Activated CD8-positive, alpha-beta memory T cell treated with anti-CD3 and anti-CD28 coated beads, Interleukin-2, amount 10 ng/mL, durations not matched to agents 7 days and 5 days (primary cell): ENCODE measurements at regions of chr2 and their contacts with region 1.

Region 1: GRCh38 chr2:135709992-135710391 is 31.7 kb upstream of the UBXN4 start:
- DNase-seq: peak; percentile 75
- ATAC-seq: peak; percentile 57
- H3K4me3 Mint-ChIP-seq: no peak overlapping the region
- H3K27ac Mint-ChIP-seq: no peak overlapping the region
- H3K4me1 Mint-ChIP-seq: peaks cover 2% of the 10 kb centered on the region
- H3K27me3 Mint-ChIP-seq: no peaks in the 10 kb centered on the region

Region 2: GRCh38 chr2:134988994-134989605 is 720.9 kb before region 1 on chr2:
- CTCF ChIA-PET with region 1: interaction called, 14 read pairs
- DNase-seq: no peak
- ATAC-seq: no peak
- H3K4me3 Mint-ChIP-seq: no peak overlapping the region
- H3K27ac Mint-ChIP-seq: no peak overlapping the region
- H3K4me1 Mint-ChIP-seq: no peaks in the 10 kb centered on the region
- H3K27me3 Mint-ChIP-seq: peaks cover 25% of the 10 kb centered on the region

Region 3: GRCh38 chr2:135004005-135004746 is 705.8 kb before region 1 on chr2:
- CTCF ChIA-PET with region 1: interaction called, 71 read pairs
- DNase-seq: peak; percentile 75
- ATAC-seq: peak; percentile 99
- H3K4me3 Mint-ChIP-seq: no peak overlapping the region
- H3K27ac Mint-ChIP-seq: no peak overlapping the region
- H3K4me1 Mint-ChIP-seq: peaks cover 5% of the 10 kb centered on the region
- H3K27me3 Mint-ChIP-seq: peaks cover 30% of the 10 kb centered on the region

Region 4: DNA sequence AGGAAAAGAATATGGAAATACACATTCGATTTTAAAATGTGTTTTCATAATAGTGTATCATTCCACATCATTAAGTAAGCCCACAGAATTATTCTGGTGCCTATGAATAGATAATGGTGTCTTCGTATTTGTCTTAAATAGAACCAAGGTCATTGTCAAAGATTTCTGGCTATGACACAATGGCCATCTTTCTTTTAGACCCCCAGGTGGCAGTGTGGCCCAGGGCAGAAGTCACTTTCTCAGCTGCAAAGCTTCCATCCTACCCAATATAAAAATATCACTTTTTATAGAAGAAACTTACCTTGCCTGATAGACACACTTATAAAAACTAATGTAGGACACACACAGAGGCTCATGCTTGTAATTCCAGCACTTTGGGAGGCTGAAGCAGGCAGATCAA is 236.4 kb before region 1 on chr2:
- CTCF ChIA-PET with region 1: interaction called, 61 read pairs
- DNase-seq: peak; percentile 47
- ATAC-seq: peak; percentile 33
- H3K4me3 Mint-ChIP-seq: no peak overlapping the region
- H3K27ac Mint-ChIP-seq: no peak overlapping the region
- H3K4me1 Mint-ChIP-seq: peaks cover 9% of the 10 kb centered on the region
- H3K27me3 Mint-ChIP-seq: no peaks in the 10 kb centered on the region

Region 5: GRCh38 chr2:135531231-135532228 is 178.5 kb before region 1 on chr2 and contains the start of gene R3HDM1:
- CTCF ChIA-PET with region 1: interaction called, 10 read pairs
- DNase-seq: peak; percentile 97
- ATAC-seq: peak; percentile 86
- H3K4me3 Mint-ChIP-seq: no peak within 1 kb of the TSS
- H3K27ac Mint-ChIP-seq: peak within 1 kb of the TSS; percentile 77
- H3K4me1 Mint-ChIP-seq: peaks cover 37% of the 10 kb centered on the region
- H3K27me3 Mint-ChIP-seq: no peaks in the 10 kb centered on the region
- total RNA-seq, gene R3HDM1: 47.5 to 57.3 TPM

Region 6: DNA sequence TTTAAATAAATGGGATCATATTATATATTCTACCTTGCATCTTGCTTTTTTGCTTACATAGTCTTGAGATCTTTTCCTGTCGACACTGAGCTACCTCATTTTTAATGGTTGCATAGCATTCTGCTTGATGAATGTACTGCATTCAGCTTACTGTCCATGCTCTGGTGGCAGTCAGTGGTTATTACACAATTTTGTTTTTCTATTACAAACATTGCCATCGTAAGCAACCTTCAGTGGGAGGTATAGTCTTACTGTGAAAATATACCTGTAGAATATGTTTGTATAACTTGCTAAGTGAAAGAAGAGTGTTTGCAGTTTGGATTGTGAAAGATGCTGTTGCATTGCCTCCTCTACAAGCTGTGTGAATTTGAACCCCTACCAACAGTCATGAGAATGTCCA is 75.0 kb after region 1 on chr2:
- CTCF ChIA-PET with region 1: no interaction called
- DNase-seq: no peak
- ATAC-seq: no peak
- H3K4me3 Mint-ChIP-seq: no peak overlapping the region
- H3K27ac Mint-ChIP-seq: no peak overlapping the region
- H3K4me1 Mint-ChIP-seq: peaks cover 2% of the 10 kb centered on the region
- H3K27me3 Mint-ChIP-seq: no peaks in the 10 kb centered on the region